B cell (primary cell): ENCODE measurements at regions of chr11 and their contacts with region 1.

Region 1: GRCh38 chr11:47354913-47355282 is 2.4 kb upstream of the MYBPC3 start:
- DNase-seq: no peak
- ATAC-seq: no peak
- H3K4me3 ChIP-seq: no peak overlapping the region
- H3K4me3 Mint-ChIP-seq: no peak overlapping the region
- H3K27ac ChIP-seq: no peak overlapping the region
- H3K27ac Mint-ChIP-seq: no peak overlapping the region
- H3K4me1 ChIP-seq: peaks cover 6 to 7% of the 10 kb centered on the region in 2 donors
- H3K4me1 Mint-ChIP-seq: peaks cover 8% of the 10 kb centered on the region
- H3K27me3 ChIP-seq: no peaks in the 10 kb centered on the region
- H3K27me3 Mint-ChIP-seq: no peaks in the 10 kb centered on the region
- CTCF ChIP-seq: no peak

Region 2: GRCh38 chr11:47383071-47383470 is 28.2 kb after region 1 on chr11:
- CTCF ChIA-PET with region 1: no interaction called
- POLR2A ChIA-PET with region 1: no interaction called
- intact Hi-C with region 1: no loop called
- DNase-seq: no peak
- ATAC-seq: no peak
- H3K4me3 ChIP-seq: no peak overlapping the region
- H3K4me3 Mint-ChIP-seq: no peak overlapping the region
- H3K27ac ChIP-seq: no peak overlapping the region
- H3K27ac Mint-ChIP-seq: no peak overlapping the region
- H3K4me1 ChIP-seq: peaks cover 12 to 13% of the 10 kb centered on the region in 2 donors
- H3K4me1 Mint-ChIP-seq: peaks cover 2% of the 10 kb centered on the region
- H3K27me3 ChIP-seq: no peaks in the 10 kb centered on the region
- H3K27me3 Mint-ChIP-seq: no peaks in the 10 kb centered on the region
- CTCF ChIP-seq: no peak

Region 3: DNA sequence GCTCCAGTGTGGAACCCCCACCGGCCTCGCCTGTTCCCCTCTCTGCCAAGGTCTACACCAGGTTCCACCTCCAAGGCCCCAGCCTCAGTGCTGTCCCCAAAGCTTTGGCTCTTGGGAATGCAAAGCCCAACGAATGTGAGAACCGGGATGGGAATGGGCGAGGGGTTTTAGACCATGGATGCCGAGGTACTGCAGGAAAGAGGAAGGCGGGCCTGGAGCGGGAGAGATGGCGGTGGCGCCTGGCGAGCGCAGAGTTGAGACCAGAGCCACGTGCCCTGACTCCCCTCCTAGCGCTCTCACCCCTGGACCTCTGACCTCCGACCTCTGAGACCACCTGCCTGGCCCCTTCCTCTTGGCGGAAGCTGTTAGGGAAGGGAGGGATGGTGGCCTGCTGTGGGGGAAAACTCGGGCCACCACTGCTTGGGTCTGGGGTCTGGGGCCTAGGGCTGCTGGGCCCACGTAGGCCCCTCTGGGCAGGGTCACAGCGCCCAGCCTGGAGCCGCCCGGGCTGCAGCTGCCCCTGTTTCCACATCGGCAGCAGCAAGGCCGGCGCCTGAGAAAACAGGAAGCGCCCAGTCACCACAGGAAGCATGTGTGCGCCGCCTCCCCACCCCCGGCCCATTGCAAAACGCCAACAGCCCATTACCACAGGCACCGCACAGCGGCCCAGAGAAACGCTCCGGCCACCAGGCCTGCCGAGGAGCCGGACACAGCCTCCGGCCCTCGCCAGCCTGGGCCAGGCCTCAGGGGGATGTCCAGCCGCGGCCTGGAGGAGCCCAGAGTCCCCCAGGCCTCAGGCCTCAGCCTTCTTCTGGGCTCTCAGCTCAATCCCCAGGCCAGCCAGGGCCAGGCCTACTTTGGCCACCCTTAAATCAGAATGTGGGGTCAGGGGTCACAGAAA is 39.7 kb after region 1 on chr11:
- CTCF ChIA-PET with region 1: no interaction called
- POLR2A ChIA-PET with region 1: interaction called, 17 read pairs
- intact Hi-C with region 1: no loop called
- DNase-seq: peak; percentile 80
- ATAC-seq: peak; percentile 76
- H3K4me3 ChIP-seq: peak overlapping the region; percentile 2 to 55 (median 45)
- H3K4me3 Mint-ChIP-seq: peak overlapping the region; percentile 85
- H3K27ac ChIP-seq: peak overlapping the region; percentile 95 to 97
- H3K27ac Mint-ChIP-seq: peak overlapping the region; percentile 98
- H3K4me1 ChIP-seq: peaks cover 59 to 82% of the 10 kb centered on the region in 2 donors
- H3K4me1 Mint-ChIP-seq: peaks cover 70% of the 10 kb centered on the region
- H3K27me3 ChIP-seq: no peaks in the 10 kb centered on the region
- H3K27me3 Mint-ChIP-seq: no peaks in the 10 kb centered on the region
- CTCF ChIP-seq: no peak

Region 4: DNA sequence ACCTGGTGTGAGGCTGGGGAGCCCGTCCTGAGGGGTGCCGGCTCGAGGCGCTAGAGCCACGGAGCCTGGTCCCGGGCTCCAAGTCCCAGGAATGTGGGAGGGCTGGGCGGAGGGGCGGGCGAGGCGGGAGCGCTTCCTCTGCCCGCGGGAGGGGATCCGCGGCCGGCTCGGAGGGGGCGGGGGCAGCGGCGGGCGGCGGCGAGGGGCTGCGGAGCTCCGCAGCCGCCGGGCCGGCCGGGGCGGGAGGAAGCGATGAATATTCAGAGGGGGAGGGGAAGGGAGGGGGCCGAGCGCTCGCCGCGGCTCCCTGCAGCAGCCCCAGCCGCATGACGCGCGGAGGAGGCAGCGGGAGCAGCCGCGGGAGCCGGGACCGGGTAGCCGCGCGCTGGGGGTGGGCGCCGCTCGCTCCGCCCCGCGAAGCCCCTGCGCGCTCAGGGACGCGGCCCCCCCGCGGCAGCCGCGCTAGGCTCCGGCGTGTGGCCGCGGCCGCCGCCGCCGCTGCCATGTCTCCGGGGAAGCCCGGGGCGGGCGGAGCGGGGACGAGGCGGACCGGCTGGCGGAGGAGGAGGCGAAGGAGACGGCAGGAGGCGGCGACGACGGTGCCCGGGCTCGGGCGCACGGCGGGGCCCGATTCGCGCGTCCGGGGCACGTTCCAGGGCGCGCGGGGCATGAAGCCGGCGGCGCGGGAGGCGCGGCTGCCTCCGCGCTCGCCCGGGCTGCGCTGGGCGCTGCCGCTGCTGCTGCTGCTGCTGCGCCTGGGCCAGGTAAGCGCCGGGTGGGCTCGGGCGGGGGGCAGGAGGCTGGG is 625.5 kb after region 1 on chr11 and contains the start of gene PTPRJ:
- CTCF ChIA-PET with region 1: no interaction called
- POLR2A ChIA-PET with region 1: no interaction called
- intact Hi-C with region 1: no loop called
- DNase-seq: peak; percentile 80
- ATAC-seq: peak; percentile 68
- H3K4me3 ChIP-seq: peak within 1 kb of the TSS; percentile 56 to 82 (median 78)
- H3K4me3 Mint-ChIP-seq: peak within 1 kb of the TSS; percentile 94
- H3K27ac ChIP-seq: peak within 1 kb of the TSS in 1 of 2 donors; percentile 64
- H3K27ac Mint-ChIP-seq: peak within 1 kb of the TSS; percentile 64
- H3K4me1 ChIP-seq: peaks cover 27 to 37% of the 10 kb centered on the region in 2 donors
- H3K4me1 Mint-ChIP-seq: peaks cover 36% of the 10 kb centered on the region
- H3K27me3 ChIP-seq: no peaks in the 10 kb centered on the region
- H3K27me3 Mint-ChIP-seq: no peaks in the 10 kb centered on the region
- CTCF ChIP-seq: no peak
- total RNA-seq, gene PTPRJ: 20.0 and 20.3 TPM in 2 replicates